Calu3 (cell line): ENCODE measurements at regions of chr18 and their contacts with region 1.

Region 1: GRCh38 chr18:43271593-43272432 is 5.5 kb downstream of the SYT4 start:
- DNase-seq: peak; percentile 46
- H3K4me3 Mint-ChIP-seq: no peak overlapping the region
- H3K27ac Mint-ChIP-seq: no peak overlapping the region
- H3K4me1 Mint-ChIP-seq: no peaks in the 10 kb centered on the region
- H3K27me3 Mint-ChIP-seq: peaks cover 13% of the 10 kb centered on the region
- CTCF ChIP-seq: peak; percentile 57

Region 2: GRCh38 chr18:42018831-42019230 is 1253.0 kb before region 1 on chr18:
- CTCF ChIA-PET with region 1: no interaction called
- intact Hi-C with region 1: no loop called
- DNase-seq: no peak
- H3K4me3 Mint-ChIP-seq: no peak overlapping the region
- H3K27ac Mint-ChIP-seq: no peak overlapping the region
- H3K4me1 Mint-ChIP-seq: no peaks in the 10 kb centered on the region
- H3K27me3 Mint-ChIP-seq: no peaks in the 10 kb centered on the region
- CTCF ChIP-seq: no peak

Region 3: DNA sequence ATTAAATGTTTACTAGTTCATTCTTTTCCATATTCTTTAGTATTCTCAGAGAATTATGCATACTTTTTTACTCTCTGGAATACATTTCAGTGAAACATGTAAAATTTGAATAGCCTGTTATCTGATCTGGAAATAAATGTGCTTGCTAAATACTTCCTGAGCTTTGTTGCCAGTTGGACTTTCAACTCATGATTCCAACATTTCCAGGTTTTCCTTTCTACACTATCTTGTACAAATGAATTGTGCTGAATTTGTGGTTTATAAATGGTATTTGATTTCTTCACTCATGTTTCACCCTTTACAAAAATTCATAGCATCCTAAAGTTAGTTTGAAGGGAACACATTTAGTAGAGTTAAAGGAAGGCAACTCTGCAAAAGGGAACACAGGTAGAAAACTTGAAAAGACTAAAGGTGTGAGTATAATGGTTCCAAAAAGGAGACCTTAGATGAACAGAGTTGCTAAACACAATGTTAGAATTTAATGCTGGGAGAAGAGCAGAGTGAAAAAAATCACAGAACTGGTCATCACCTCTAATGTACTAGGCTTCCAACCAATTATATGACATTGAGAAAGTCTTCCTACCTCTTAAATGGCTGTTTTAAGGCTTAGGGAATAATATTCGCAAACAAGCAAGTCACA is 23.1 kb before region 1 on chr18:
- CTCF ChIA-PET with region 1: no interaction called
- intact Hi-C with region 1: no loop called
- DNase-seq: no peak
- H3K4me3 Mint-ChIP-seq: no peak overlapping the region
- H3K27ac Mint-ChIP-seq: no peak overlapping the region
- H3K4me1 Mint-ChIP-seq: no peaks in the 10 kb centered on the region
- H3K27me3 Mint-ChIP-seq: no peaks in the 10 kb centered on the region
- CTCF ChIP-seq: no peak

Region 4: DNA sequence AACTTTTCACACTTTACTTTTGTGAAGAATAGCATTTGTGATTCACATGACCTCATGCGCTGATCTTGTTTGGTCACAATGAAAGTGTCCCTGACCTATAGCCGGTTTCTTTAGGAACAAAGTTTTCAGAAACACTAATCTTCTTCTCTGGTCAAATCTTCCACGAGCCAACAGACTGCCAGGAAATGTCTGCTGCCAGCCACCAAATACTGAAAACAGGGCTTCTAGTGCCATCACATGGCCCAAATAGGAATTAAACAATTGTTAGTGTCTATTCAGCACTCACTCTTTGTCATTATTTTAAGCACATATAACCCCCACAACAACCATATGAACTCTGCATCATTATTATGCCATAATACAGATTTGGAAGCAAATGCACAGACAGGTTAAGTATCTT is 292.0 kb after region 1 on chr18:
- CTCF ChIA-PET with region 1: no interaction called
- intact Hi-C with region 1: loop called (anchors 10 kb)
- DNase-seq: peak; percentile 51
- H3K4me3 Mint-ChIP-seq: no peak overlapping the region
- H3K27ac Mint-ChIP-seq: no peak overlapping the region
- H3K4me1 Mint-ChIP-seq: peaks cover 10% of the 10 kb centered on the region
- H3K27me3 Mint-ChIP-seq: peaks cover 19% of the 10 kb centered on the region
- CTCF ChIP-seq: peak; percentile 47